ENCODE measurements at regions of chr7 and their contacts with region 1.

Region 1: GRCh38 chr7:4610768-4611467 is 71.2 kb upstream of the FOXK1 start:
- DNase-seq: peak; percentile 69
- ATAC-seq: peak; percentile 60
- H3K4me3 ChIP-seq: no peak overlapping the region
- H3K27ac ChIP-seq: no peak overlapping the region
- H3K4me1 ChIP-seq: peaks cover 10% of the 10 kb centered on the region
- H3K27me3 ChIP-seq: peaks cover 3% of the 10 kb centered on the region
- CTCF ChIP-seq: peak; percentile 86
- POLR2A ChIP-seq: peak; percentile 44; the same call in 1 of the 2 replicates
- RAD21 ChIP-seq: peak; percentile 93

Region 2: DNA sequence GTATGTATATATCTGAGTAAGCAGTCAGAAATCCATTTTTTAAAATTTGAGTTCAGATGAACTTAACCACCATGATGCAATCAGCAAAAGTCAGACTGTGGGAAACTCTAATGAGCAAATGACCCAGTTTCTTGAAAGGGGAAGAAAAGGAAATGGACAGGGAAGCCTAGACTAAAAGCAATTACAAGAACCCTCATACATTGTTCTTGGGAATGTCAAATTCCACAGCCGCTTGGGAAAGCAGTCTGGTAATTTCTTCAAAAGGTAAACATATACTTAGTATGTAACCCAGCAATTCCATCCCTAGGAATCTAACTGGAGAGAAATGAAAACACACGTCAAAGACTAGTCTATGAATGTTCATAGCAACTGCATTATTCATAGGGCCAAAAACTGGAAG is 54.7 kb after region 1 on chr7:
- CTCF ChIA-PET with region 1: no interaction called
- POLR2A ChIA-PET with region 1: no interaction called
- dilution Hi-C with region 1: no loop called
- in situ Hi-C with region 1: no loop called
- intact Hi-C with region 1: no loop called
- DNase-seq: peak; percentile 99
- ATAC-seq: peak; percentile 66
- H3K4me3 ChIP-seq: no peak overlapping the region
- H3K27ac ChIP-seq: no peak overlapping the region
- H3K4me1 ChIP-seq: peaks cover 11% of the 10 kb centered on the region
- H3K27me3 ChIP-seq: no peaks in the 10 kb centered on the region
- CTCF ChIP-seq: no peak
- POLR2A ChIP-seq: no peak
- RAD21 ChIP-seq: no peak

Region 3: GRCh38 chr7:4681886-4682620 is 71.1 kb after region 1 on chr7 and contains the start of gene FOXK1:
- CTCF ChIA-PET with region 1: no interaction called
- POLR2A ChIA-PET with region 1: no interaction called
- dilution Hi-C with region 1: no loop called
- in situ Hi-C with region 1: no loop called
- intact Hi-C with region 1: loop called (anchors 2 kb)
- DNase-seq: peak; percentile 65
- ATAC-seq: peak; percentile 88
- H3K4me3 ChIP-seq: peak within 1 kb of the TSS; percentile 91
- H3K27ac ChIP-seq: peak within 1 kb of the TSS; percentile 100
- H3K4me1 ChIP-seq: peaks cover 9% of the 10 kb centered on the region
- H3K27me3 ChIP-seq: no peaks in the 10 kb centered on the region
- CTCF ChIP-seq: 0 out of 2 replicates have a peak, but pooled peaks have one; percentile 11
- POLR2A ChIP-seq: peak; percentile 52; the same call in 1 of the 2 replicates
- RAD21 ChIP-seq: peak; percentile 20; the same call in 1 of the 2 replicates
- total RNA-seq, gene FOXK1: 4.3 and 5.0 TPM in 2 replicates

Region 4: GRCh38 chr7:4775250-4775847 is 164.4 kb after region 1 on chr7 and contains the start of gene AP5Z1:
- CTCF ChIA-PET with region 1: no interaction called
- POLR2A ChIA-PET with region 1: interaction called, 3 read pairs
- dilution Hi-C with region 1: no loop called
- in situ Hi-C with region 1: no loop called
- intact Hi-C with region 1: loop called (anchors 10 kb)
- DNase-seq: peak; percentile 96
- ATAC-seq: peak; percentile 94
- H3K4me3 ChIP-seq: peak within 1 kb of the TSS; percentile 83
- H3K27ac ChIP-seq: peak within 1 kb of the TSS; percentile 69
- H3K4me1 ChIP-seq: peaks cover 4% of the 10 kb centered on the region; the same call in 1 of the 2 replicates
- H3K27me3 ChIP-seq: no peaks in the 10 kb centered on the region
- CTCF ChIP-seq: no peak
- POLR2A ChIP-seq: peak; percentile 87
- RAD21 ChIP-seq: peak; percentile 1; the same call in 1 of the 2 replicates
- total RNA-seq, gene AP5Z1: 9.2 and 9.7 TPM in 2 replicates

Region 5: GRCh38 chr7:5077740-5078139 is 466.8 kb after region 1 on chr7:
- CTCF ChIA-PET with region 1: no interaction called
- POLR2A ChIA-PET with region 1: no interaction called
- dilution Hi-C with region 1: no loop called
- in situ Hi-C with region 1: loop called (anchors 25 kb)
- intact Hi-C with region 1: no loop called
- DNase-seq: peak; percentile 7
- ATAC-seq: 0 out of 2 replicates have a peak, but pooled peaks have one; percentile 21
- H3K4me3 ChIP-seq: peak overlapping the region; percentile 13; the same call in 1 of the 2 replicates
- H3K27ac ChIP-seq: no peak overlapping the region
- H3K4me1 ChIP-seq: no peaks in the 10 kb centered on the region
- H3K27me3 ChIP-seq: peaks cover 2% of the 10 kb centered on the region; the same call in 1 of the 2 replicates
- CTCF ChIP-seq: no peak
- POLR2A ChIP-seq: no peak
- RAD21 ChIP-seq: no peak

Region 6: DNA sequence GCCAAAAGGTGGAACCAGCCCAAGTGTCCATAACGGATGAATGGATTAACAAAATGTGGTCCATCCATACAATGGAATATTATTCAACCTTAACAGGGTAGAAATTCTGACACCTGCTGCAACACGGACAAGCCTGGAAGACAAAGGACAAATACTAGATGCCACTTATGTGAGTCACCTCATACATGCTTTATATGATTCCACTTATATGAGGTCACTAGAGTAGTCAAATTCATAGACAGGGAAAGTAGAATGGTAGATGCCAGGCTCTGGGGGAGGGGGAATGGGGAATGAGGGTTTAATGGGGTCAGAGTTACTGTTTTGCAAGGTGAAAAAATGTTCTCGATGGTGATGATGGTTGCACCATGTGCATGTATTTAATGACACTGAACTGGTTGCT is 1695.6 kb after region 1 on chr7:
- CTCF ChIA-PET with region 1: no interaction called
- POLR2A ChIA-PET with region 1: no interaction called
- dilution Hi-C with region 1: no loop called
- in situ Hi-C with region 1: no loop called
- intact Hi-C with region 1: no loop called
- DNase-seq: peak; percentile 74
- ATAC-seq: peak; percentile 73
- H3K4me3 ChIP-seq: no peak overlapping the region
- H3K27ac ChIP-seq: no peak overlapping the region
- H3K4me1 ChIP-seq: peaks cover 6% of the 10 kb centered on the region
- H3K27me3 ChIP-seq: no peaks in the 10 kb centered on the region
- CTCF ChIP-seq: no peak
- POLR2A ChIP-seq: no peak
- RAD21 ChIP-seq: no peak